Right ventricle myocardium superior (tissue), 1 donor: ENCODE measurements at regions of chr17 and their contacts with region 1.

Region 1: DNA sequence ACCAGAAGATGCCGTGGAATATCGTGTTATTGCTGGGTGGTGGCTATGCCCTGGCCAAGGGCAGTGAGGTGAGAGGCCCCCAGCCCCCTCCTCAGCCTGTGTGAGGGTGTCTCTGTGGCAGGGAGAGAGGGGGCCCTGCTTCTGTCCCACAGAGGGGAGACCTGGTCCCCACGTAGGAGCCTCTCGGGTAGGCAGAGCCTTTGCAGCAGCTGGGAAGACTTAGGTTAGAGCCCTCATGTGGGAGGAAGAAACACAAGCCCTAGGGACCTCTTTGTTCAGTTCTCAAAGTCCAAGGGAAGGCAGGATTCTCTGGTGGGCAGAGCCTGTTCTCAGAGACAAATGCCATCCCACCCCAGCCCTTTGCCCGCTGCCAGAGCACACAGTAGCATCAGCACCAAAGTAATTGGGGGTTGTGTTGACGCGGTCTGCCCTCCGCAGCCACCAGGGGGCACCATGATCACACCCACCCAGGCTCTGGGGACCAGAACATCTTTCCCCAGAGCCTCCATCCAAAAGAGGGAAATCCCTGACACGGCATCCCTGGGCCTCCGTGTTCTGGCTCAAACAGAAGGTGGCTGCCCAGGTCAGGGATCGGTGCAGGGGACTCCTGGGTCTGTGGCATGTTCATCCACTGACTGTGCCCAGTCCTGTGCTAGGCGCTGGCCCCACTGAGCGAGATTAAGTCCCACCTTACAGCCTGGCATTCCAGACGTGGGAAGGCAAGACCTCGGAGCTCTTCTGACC is 11.5 kb upstream of the FOXN1 start:
- DNase-seq: peak; percentile 79
- ATAC-seq: peak; percentile 81

Region 2: DNA sequence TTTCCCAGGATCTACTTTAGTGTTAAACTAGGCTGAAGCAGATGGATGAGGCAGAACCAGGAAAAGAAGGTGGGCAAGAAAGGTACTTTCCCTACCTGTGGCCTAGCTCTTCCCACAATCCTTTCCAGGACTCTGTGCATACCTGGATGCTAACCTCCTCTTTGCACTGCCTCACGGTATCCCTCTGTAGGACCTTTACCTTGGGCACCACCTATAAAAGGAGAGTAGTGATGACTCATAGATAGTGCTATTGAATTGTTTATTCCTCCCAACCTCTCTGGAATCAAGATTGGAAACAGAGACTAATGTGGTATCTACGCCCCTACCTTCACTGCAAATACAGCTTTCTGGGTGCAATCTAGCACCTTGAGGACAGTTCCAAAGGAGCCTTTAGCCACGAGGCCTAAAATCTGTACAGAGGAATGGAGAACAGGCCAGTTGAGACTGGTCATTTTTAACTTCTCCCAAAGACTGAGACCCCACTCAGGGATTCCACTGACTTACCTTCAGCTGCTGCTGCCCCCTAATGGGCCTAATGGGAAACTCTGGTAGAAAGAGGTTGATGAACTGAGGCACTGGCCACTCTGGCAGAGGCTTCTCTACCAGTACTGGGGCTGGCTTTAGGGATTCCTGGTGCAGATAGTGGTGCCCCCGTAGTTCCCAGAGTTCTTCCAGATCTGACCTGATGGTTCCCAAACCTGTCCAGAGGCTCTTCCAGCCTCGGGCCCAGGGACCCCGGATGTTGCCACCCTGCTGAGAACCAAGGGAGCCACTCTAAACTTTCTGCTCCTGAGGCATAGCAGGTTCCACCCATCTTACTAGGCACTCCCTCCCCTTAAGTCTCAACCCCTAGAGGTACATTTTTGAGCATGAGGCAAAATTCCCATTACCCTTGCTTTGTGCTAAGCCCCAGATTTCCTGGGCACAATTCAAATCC is 118.6 kb after region 1 on chr17:
- intact Hi-C with region 1: loop called (anchors 5 kb)
- DNase-seq: no peak
- ATAC-seq: peak; percentile 66